Activated CD4-positive, alpha-beta T cell treated with anti-CD3 and anti-CD28 coated beads for 36 hours (primary cell): ENCODE measurements at regions of chr7 and their contacts with region 1.

Region 1: DNA sequence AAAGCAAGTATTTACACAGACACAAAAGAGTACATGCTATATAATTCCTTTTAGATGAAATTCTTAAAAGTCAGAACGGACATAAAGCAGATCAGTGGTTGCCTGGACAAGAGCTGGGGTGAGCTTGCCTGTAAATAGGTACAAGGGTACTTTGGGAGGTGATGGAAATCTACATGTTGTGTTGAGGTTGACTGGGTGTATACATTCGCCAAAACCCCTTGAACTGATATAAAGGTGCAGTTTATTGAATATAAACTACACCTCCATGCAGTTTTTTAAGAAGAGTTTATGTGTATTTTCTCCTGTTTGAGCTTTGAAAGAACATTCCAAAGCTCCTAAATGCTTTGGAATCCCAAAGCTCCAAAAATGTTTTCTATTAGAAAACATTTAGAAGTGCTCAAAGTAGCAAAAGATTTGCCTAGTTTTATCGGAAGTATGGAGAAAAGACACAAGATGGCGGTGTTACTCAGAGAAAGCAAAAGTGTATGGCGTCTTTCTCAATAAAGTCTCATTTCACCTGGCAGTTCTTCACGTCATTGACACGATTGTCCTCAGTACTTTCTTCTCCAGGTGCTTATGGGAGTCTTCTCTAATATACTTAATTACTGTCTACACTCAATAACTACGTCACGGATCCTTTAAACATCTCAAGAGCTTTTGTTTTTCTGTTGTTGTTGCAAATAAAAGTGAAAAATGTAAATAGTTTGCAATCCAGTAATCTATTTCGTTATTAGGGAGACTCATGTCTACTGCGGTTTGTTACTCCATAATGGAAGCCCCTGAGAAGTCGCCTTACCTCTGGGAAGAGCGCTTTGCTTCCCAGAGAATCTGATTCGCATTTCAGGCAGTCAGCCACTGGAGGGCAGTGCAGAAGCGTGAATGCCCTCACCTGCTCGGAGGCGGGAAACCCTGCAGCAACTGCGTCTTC is 14.7 kb upstream of the SEC61G start:
- DNase-seq: peak; percentile 87
- ATAC-seq: peak; percentile 91
- H3K4me3 Mint-ChIP-seq: peak overlapping the region; percentile 62
- H3K27ac Mint-ChIP-seq: peak overlapping the region; percentile 71
- H3K4me1 Mint-ChIP-seq: peaks cover 6% of the 10 kb centered on the region
- H3K27me3 Mint-ChIP-seq: peaks cover 19% of the 10 kb centered on the region

Region 2: GRCh38 chr7:54565432-54565831 is 208.3 kb before region 1 on chr7:
- CTCF ChIA-PET with region 1: no interaction called
- POLR2A ChIA-PET with region 1: no interaction called
- intact Hi-C with region 1: no loop called
- DNase-seq: no peak
- ATAC-seq: no peak
- H3K4me3 Mint-ChIP-seq: no peak overlapping the region
- H3K27ac Mint-ChIP-seq: no peak overlapping the region
- H3K4me1 Mint-ChIP-seq: no peaks in the 10 kb centered on the region
- H3K27me3 Mint-ChIP-seq: no peaks in the 10 kb centered on the region

Region 3: DNA sequence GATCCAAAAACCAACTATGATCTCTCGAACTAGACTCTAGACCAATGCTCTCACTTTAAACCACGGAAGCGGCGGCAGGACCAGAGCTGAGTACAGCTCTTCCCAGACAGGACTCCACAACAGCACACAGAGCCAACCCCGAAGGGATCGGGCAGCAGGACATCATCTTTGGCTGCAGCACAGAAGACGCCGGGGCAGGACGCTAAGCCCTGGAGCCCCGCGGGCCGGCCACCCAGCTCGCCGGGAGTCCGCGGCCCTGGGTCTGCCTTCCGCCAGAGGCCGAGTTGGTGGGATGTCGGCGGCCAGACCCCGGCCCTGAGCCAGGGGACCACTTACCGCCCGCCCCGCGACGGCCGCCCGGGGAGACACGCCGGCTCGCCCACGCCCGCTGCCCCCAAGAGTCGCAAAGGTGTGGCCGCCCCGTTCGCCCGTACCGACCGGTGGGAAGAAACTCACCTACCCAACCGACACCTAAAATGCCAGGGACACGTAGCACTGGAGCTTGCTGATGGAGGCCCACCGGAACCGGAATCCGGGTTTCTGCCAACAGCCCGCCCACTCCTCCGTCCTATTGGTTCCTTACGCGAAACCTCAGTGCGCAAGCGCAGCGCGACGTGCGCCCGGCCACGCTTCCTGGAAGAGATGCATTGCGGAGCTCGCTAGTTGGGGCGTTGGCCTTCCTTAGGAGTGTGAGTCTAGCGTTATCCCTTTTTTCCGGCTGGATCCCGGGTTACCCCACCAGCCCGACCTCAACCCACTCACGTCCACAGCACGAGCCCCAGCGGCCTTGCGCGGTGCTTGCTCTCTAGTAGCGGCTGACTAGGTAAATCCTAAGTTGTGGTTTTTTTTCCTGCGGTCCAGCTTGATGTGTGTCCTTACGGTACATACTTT is 14.8 kb before region 1 on chr7 and contains the start of gene SEC61G:
- CTCF ChIA-PET with region 1: interaction called, 24 read pairs
- POLR2A ChIA-PET with region 1: no interaction called
- intact Hi-C with region 1: no loop called
- DNase-seq: peak; percentile 97
- ATAC-seq: peak; percentile 91
- H3K4me3 Mint-ChIP-seq: peak within 1 kb of the TSS; percentile 91
- H3K27ac Mint-ChIP-seq: peak within 1 kb of the TSS; percentile 95
- H3K4me1 Mint-ChIP-seq: peaks cover 20% of the 10 kb centered on the region
- H3K27me3 Mint-ChIP-seq: peaks cover 2% of the 10 kb centered on the region
- total RNA-seq, gene SEC61G: 78.4 to 191 TPM

Region 4: DNA sequence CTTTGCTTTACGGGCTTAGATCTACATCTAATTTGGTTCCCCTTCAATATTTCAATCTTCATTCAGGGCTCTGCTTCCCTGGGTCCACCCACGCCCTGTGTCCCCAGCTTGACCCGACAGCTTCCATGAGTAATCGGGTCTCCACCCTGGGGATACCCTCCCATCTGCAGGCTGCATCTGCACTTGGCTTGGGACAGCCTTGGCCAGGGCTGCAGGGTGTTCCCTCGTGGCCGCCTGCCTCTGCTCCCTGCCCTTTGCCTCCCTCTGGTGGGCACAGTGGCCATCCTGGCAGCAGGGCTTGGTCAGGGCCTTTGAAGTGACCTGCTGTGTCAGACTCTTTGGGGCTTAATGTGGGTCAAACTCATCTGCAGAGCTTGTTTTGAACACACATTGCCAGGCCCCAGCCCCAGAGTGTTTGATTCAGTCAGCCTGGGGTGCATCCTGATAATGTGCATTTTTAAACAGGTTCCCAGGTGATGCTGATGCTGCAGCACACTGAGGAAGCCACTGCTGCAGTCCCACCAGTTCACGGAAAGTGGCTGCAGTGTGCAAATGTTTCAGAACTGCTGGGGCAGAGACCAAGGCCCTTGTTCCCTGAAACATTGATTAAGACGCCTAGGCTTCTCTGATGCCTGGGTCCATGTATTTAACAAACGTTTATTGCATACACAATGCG is 65.9 kb after region 1 on chr7:
- CTCF ChIA-PET with region 1: interaction called, 3 read pairs
- POLR2A ChIA-PET with region 1: no interaction called
- intact Hi-C with region 1: loop called in 1 of 2 experiments (anchors 5 kb)
- DNase-seq: peak; percentile 16
- ATAC-seq: no peak
- H3K4me3 Mint-ChIP-seq: no peak overlapping the region
- H3K27ac Mint-ChIP-seq: no peak overlapping the region
- H3K4me1 Mint-ChIP-seq: no peaks in the 10 kb centered on the region
- H3K27me3 Mint-ChIP-seq: peaks cover 19% of the 10 kb centered on the region

Region 5: DNA sequence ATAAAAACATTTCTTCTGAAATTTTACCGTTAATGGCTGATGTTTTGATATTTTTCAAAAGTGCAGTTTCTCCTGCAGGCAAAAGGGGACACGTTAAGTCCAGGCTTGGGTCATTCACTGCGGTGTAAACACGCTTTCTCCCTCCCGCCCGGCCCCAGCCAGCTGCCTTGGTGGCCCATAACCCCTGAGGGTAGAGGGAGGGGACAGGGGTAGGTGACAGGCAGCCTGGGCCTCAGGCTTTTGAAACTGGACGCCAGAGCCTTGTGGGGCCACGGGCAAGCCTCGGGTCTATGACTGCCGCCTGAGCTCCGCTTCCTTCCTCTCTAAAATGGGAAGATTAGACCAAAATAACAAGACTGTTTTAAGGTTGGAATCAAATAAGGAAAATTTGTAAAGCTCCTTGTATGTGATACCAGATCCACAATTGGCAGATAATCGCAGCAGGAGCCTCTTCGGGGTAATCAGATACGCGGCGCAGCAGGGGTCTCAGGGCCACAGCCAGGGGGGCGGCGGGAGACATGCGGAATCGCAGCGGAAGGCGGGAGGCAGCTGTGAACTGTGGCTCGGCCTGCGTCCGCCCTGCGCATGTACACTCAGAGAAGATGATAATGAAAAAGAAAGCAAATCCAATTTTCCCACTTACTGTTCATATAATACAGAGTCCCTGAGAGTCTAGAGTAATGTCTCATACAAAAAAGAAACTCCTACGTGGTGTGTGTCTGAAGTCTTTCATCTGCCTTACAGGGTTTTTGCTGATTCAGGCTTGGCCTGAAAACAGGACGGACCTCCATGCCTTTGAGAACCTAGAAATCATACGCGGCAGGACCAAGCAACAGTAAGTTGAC is 383.4 kb after region 1 on chr7:
- CTCF ChIA-PET with region 1: no interaction called
- POLR2A ChIA-PET with region 1: no interaction called
- intact Hi-C with region 1: no loop called
- DNase-seq: no peak
- ATAC-seq: no peak
- H3K4me3 Mint-ChIP-seq: no peak overlapping the region
- H3K27ac Mint-ChIP-seq: no peak overlapping the region
- H3K4me1 Mint-ChIP-seq: no peaks in the 10 kb centered on the region
- H3K27me3 Mint-ChIP-seq: peaks cover 14% of the 10 kb centered on the region

Region 6: DNA sequence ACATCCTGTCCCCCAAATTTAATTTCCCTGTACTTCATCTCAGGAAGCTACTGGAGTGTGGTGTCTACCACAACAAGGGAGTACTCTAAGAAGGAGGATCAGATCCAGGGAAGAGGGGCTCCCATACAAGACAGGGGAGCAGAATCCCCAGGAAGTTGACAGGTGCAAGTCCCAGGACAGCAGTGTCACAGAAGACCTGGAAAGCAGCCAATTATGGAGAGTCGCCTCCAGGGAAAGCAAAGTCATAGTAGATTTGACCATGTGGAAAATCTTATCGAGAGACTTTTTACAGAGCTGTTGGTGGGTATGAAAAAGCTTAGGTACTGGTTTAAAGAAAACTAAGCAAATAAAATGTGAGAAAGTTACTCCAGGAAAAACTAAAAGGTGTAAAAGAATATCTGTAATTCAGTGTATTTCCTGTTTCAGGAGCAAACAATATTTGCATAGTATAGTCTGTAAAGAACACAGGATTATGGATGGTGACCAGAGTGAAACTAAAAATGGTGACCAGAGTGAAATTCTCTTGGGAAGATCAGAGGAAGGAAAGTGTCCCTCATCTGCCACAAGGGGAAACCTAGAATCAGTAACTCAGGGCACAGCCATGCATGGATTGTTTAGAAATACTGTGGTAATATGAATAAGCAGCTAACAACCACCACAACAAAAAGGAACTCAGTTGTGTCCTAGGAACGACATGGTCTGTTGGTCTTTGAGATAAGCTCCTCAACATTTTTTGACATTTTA is 635.9 kb after region 1 on chr7:
- CTCF ChIA-PET with region 1: no interaction called
- POLR2A ChIA-PET with region 1: no interaction called
- intact Hi-C with region 1: loop called in 1 of 2 experiments (anchors 5 kb)
- DNase-seq: no peak
- ATAC-seq: no peak
- H3K4me3 Mint-ChIP-seq: no peak overlapping the region
- H3K27ac Mint-ChIP-seq: peak overlapping the region; percentile 14
- H3K4me1 Mint-ChIP-seq: no peaks in the 10 kb centered on the region
- H3K27me3 Mint-ChIP-seq: no peaks in the 10 kb centered on the region

Region 7: GRCh38 chr7:55415173-55415778 is 641.5 kb after region 1 on chr7:
- CTCF ChIA-PET with region 1: interaction called, 3 read pairs
- POLR2A ChIA-PET with region 1: no interaction called
- intact Hi-C with region 1: loop called (anchors 5 kb)
- DNase-seq: peak; percentile 92
- ATAC-seq: peak; percentile 93
- H3K4me3 Mint-ChIP-seq: no peak overlapping the region
- H3K27ac Mint-ChIP-seq: no peak overlapping the region
- H3K4me1 Mint-ChIP-seq: peaks cover 2% of the 10 kb centered on the region
- H3K27me3 Mint-ChIP-seq: no peaks in the 10 kb centered on the region